ENCODE measurements at regions of chr15 and their contacts with region 1.

Region 1: GRCh38 chr15:75947092-75947491 is 43.4 kb downstream of the FBXO22 start:
- DNase-seq: peak; percentile 77
- H3K4me3 Mint-ChIP-seq: no peak overlapping the region
- H3K27ac Mint-ChIP-seq: no peak overlapping the region
- H3K4me1 Mint-ChIP-seq: peaks cover 14% of the 10 kb centered on the region
- H3K27me3 Mint-ChIP-seq: no peaks in the 10 kb centered on the region
- CTCF ChIP-seq: no peak

Region 2: DNA sequence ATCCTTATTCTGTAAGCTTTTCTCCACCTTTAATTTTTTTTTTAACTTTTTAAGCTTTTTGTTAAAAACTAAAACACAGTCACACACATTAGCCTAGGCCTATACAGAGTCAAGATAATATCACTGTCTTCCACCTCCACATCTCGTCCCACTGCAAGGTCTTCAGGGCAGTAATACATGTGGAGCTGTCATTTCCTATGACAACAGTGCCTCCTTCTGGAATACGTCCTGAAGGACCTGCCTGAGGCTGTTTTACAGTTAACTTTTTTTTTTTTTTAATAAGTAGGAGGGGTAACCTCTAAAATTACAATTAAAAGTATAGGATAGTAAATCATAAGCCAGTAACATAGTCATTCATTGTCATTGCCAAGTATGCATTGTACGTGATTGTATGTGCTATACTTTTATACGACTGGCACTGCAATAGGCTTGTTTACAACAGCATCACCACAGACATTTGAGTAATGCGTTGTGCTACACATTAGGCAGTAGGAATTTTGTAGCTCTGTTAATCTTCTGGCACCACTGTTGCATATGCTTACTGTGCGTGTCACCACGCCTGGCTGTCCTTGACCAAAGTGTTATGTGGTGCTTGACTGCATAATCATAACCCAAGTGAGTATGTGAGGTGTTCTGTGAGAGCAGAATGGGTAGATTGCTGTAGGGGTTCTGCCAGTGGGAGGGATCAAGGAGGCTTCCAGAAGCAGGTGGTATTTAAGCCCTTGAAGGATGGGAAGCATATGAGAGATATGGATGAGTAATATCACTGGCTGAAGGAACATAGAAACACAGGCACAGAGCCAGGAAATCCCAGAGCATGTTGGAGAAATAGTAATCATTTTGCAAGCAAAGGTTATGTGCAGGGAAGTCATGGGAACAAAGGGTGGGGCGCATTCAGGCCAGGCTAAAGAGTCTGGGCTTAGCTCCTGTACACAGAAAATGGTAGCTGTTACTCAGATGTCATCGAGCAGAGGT is 25.1 kb before region 1 on chr15:
- CTCF ChIA-PET with region 1: interaction called, 3 read pairs
- POLR2A ChIA-PET with region 1: interaction called, 17 read pairs
- intact Hi-C with region 1: no loop called
- DNase-seq: peak; percentile 96
- H3K4me3 Mint-ChIP-seq: peak overlapping the region; percentile 59
- H3K27ac Mint-ChIP-seq: peak overlapping the region; percentile 95
- H3K4me1 Mint-ChIP-seq: peaks cover 30% of the 10 kb centered on the region
- H3K27me3 Mint-ChIP-seq: no peaks in the 10 kb centered on the region
- CTCF ChIP-seq: peak; percentile 34

Measured in MCF 10A (cell line).